ENCODE measurements at regions of chr1 and their contacts with region 1.

Region 1: DNA sequence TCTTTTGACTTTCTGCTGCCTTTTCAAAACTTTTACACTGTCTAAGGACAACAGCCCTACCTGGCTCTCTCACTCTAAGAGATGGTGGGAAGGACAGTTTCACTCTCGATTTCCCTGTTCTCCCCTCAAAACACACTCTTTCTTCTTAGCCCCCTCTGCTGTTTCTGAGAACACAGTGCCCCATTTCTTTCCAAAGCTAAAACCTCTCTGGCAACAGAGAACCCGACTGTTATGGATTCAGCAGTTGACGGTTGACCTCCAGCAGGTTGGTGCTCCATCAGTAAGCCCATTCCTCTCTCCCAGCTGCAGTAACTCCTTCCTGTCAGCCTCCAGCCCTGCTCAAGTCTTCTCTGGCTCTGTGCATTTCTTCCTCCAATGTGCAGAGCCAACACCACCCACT is 88.2 kb upstream of the ABCD3 start:
- DNase-seq: peak; percentile 26 to 48 (median 48)
- H3K4me3 ChIP-seq: no peak overlapping the region
- H3K27ac ChIP-seq: no peak overlapping the region
- H3K4me1 ChIP-seq: peaks cover 0 to 15% (median 4%) of the 10 kb centered on the region in 4 experiments
- H3K27me3 ChIP-seq: peaks cover 0 to 8% (median 0%) of the 10 kb centered on the region in 5 experiments

Region 2: DNA sequence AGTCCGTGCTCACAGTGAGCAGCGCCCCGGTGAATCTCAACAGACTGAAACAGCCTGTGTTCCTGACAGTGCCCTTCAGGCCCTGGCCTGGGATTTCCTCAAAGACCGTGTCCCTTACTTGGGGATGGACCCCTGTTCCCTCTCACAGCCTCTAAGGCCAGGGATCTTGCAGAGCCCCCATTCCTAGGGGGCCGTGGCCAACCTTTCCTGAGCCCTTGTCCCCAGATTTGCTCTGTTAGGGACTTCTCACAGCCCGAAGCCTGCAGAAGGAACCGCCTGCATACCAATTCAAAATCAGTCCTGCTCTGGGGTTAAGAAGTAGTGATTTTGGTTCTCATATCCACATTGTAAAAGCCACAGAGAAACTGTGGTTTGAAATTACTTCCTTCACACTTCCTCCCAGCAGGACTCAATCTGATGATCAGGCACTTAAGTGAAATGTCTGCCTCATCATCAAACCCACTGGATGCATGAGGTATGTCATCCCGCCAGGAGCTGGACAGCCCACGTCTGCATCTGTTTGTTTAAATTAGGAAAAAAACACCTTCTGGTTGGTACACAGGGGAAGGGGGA is 223.9 kb before region 1 on chr1:
- CTCF ChIA-PET with region 1: interaction called, 10 read pairs
- POLR2A ChIA-PET with region 1: no interaction called
- DNase-seq: peak in 2 of 3 donors; percentile 82 to 84
- H3K4me3 ChIP-seq: no peak overlapping the region
- H3K27ac ChIP-seq: no peak overlapping the region
- H3K4me1 ChIP-seq: peaks cover 0 to 33% (median 24%) of the 10 kb centered on the region in 4 experiments
- H3K27me3 ChIP-seq: peaks cover 0 to 66% (median 46%) of the 10 kb centered on the region in 5 experiments

Region 3: GRCh38 chr1:94345148-94345721 is 15.2 kb after region 1 on chr1:
- CTCF ChIA-PET with region 1: interaction called, 25 read pairs
- POLR2A ChIA-PET with region 1: no interaction called
- DNase-seq: peak in 1 of 3 donors; percentile 12
- H3K4me3 ChIP-seq: no peak overlapping the region
- H3K27ac ChIP-seq: no peak overlapping the region
- H3K4me1 ChIP-seq: peaks cover 0 to 2% (median 1%) of the 10 kb centered on the region in 4 experiments
- H3K27me3 ChIP-seq: no peaks in the 10 kb centered on the region

Measured in common myeloid progenitor, CD34-positive (primary cell).